Ascending aorta (tissue), 2 donors: ENCODE measurements at regions of chr14 and their contacts with region 1.

Region 1: DNA sequence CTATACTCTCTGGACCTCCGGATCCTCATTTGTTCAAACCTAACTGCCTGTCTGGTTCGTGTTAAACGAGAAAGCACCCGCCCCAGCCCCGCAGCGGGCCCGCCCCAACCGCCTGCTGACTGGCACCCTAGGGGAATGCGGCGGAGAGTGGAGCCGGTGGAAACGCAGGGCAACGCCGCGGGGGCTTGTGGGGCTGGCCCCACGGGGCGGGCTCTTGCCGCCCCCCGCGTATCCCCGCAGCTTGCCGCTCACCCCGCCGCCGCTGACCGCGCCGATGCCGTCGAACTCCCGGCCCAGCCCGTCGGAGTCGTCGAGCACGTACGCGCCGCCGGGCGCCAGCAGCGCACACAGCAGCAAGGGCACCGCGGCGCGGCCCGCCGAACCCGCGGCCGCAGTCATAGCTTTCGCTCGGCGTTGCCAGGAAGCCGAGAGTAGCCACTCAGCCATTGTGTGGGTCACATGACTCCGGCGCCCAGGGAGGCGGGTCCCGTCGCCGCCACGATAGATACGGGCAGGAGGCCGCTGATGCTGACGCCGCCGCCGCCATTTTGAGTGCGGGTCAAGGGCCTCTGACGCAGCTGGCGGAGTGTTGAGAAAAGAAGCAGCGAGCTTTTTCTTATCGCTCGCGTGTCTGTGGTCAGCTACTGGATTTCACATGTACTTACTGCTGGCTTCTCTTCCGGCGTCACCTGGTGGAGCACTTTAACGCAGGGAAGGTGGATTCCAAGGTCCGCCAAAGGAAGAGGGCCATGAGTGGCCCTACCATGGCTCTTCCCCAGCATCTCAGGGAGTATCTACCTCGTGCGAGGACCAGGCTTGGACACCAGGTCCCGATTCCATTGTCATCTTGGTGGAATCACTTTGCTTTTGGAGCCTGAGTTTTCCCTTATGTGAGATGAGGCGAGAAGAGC is at the start of gene GALC:
- DNase-seq: peak; percentile 90 to 98
- H3K4me3 ChIP-seq: peak within 1 kb of the TSS; percentile 93 to 95
- H3K27ac ChIP-seq: peak within 1 kb of the TSS; percentile 95 to 96
- H3K4me1 ChIP-seq: peaks cover 0 to 16% of the 10 kb centered on the region in 2 donors
- H3K27me3 ChIP-seq: no peaks in the 10 kb centered on the region
- CTCF ChIP-seq: no peak
- total RNA-seq, gene GALC: 31.7 TPM

Region 2: GRCh38 chr14:88342980-88343379 is 350.0 kb after region 1 on chr14:
- intact Hi-C with region 1: no loop called
- DNase-seq: no peak
- H3K4me3 ChIP-seq: no peak overlapping the region
- H3K27ac ChIP-seq: no peak overlapping the region
- H3K4me1 ChIP-seq: no peaks in the 10 kb centered on the region
- H3K27me3 ChIP-seq: no peaks in the 10 kb centered on the region
- CTCF ChIP-seq: no peak

Region 3: DNA sequence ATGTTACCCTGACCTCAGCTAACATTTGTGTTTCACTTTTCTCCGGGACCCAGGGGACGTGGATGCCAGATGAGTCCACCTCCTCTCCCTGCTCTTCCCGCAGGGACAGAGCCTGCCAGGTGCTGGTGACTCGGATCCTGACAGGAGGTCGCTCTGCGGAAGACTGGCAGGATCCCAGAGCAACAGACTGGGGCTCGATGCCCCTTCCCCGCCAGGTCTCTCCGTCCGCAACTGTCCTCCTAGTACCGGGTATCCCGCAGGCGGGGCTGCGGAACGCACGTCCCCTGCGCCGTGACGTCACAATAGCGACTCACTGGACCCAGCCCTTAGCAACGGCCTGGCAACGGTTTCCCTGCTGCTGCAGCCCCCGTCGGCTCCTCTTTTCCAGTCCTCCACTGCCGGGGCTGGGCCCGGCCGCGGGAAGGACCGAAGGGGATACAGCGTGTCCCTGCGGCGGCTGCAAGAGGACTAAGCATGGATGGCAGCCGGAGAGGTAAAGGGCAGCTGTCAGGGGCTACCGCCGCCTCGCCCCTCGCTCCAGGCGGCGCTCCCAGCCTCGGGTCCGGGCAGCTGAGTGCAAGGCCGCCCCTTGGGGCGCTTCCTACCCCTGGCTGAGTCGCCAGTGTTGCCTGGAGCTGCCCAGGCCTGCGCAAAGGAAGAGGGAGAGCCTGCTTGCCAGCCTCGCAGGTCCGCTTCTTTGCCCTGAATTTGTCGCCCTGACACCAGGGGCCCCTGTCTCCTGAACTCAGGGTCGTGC is 392.6 kb after region 1 on chr14 and contains the start of gene SPATA7:
- intact Hi-C with region 1: loop called (anchors 2 kb)
- DNase-seq: peak; percentile 64 to 95
- H3K4me3 ChIP-seq: peak within 1 kb of the TSS; percentile 90 to 97
- H3K27ac ChIP-seq: peak within 1 kb of the TSS; percentile 70 to 82
- H3K4me1 ChIP-seq: peaks cover 4 to 12% of the 10 kb centered on the region in 2 donors
- H3K27me3 ChIP-seq: no peaks in the 10 kb centered on the region
- CTCF ChIP-seq: no peak
- total RNA-seq, gene SPATA7: 1.6 TPM

Region 4: DNA sequence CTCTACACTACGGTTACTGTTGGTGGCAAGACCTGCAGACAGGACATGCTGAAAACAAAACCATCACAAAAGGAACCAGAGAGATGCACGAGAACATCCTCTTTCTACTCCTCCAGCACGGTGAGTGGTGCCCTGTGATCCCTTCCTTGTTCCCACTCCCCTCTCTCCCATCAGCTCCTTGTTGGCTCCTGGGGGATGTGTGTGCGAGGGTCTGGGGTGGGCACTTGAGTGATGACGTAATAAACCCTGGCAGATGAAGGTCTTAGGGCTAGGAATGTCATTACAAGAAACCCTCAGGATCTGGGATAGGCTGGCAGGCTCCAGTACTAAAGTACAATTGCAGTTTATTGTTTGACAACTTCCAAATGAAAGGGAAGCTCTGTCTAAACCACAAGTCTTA is 1162.5 kb after region 1 on chr14:
- intact Hi-C with region 1: no loop called
- DNase-seq: no peak
- H3K4me3 ChIP-seq: no peak overlapping the region
- H3K27ac ChIP-seq: no peak overlapping the region
- H3K4me1 ChIP-seq: no peaks in the 10 kb centered on the region
- H3K27me3 ChIP-seq: no peaks in the 10 kb centered on the region
- CTCF ChIP-seq: no peak